Activated CD8-positive, alpha-beta T cell treated with anti-CD3 and anti-CD28 coated beads for 36 hours (primary cell): ENCODE measurements at regions of chr11 and their contacts with region 1.

Region 1: DNA sequence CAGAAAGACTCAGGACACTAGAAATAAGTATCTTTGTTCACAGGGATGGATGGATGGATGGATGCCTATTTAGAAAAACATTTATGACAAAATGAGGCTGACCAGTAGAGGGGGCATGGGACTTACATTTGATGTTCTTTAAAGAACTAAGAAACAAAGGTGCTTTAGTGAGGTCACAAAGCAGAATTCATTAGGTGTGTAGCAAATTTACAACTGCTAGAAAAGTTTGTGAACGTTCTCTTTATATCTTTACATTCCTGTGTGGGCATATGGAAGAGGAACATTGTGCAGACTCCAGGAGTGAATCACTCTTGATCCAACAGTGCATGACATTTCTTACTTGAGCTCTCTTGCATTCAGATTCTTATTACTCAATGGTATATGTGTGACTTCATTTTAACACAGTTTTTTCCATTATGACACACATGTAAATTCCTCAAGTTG is 15.8 kb upstream of the SIK2 start:
- DNase-seq: peak; percentile 74
- ATAC-seq: peak; percentile 70
- H3K4me3 Mint-ChIP-seq: no peak overlapping the region
- H3K27ac Mint-ChIP-seq: no peak overlapping the region
- H3K4me1 Mint-ChIP-seq: peaks cover 2% of the 10 kb centered on the region
- H3K27me3 Mint-ChIP-seq: peaks cover 3% of the 10 kb centered on the region
- CTCF ChIP-seq: peak; percentile 49

Region 2: GRCh38 chr11:111766093-111766833 is 179.9 kb after region 1 on chr11 and contains the start of gene PPP2R1B:
- CTCF ChIA-PET with region 1: interaction called, 11 read pairs
- POLR2A ChIA-PET with region 1: no interaction called
- intact Hi-C with region 1: no loop called
- DNase-seq: peak; percentile 80
- ATAC-seq: peak; percentile 99
- H3K4me3 Mint-ChIP-seq: peak within 1 kb of the TSS; percentile 99
- H3K27ac Mint-ChIP-seq: peak within 1 kb of the TSS; percentile 98
- H3K4me1 Mint-ChIP-seq: peaks cover 30% of the 10 kb centered on the region
- H3K27me3 Mint-ChIP-seq: no peaks in the 10 kb centered on the region
- CTCF ChIP-seq: no peak
- total RNA-seq, gene PPP2R1B: 49.7 to 54.0 TPM